Breast epithelium (tissue), 4 donors: ENCODE measurements at regions of chr2 and their contacts with region 1.

Region 1: GRCh38 chr2:26327291-26328272 is 18.4 kb upstream of the SELENOI start:
- DNase-seq: no peak
- H3K4me3 ChIP-seq: no peak overlapping the region
- H3K27ac ChIP-seq: no peak overlapping the region
- H3K4me1 ChIP-seq: no peaks in the 10 kb centered on the region
- H3K27me3 ChIP-seq: no peaks in the 10 kb centered on the region
- CTCF ChIP-seq: no peak
- POLR2A ChIP-seq: no peak

Region 2: DNA sequence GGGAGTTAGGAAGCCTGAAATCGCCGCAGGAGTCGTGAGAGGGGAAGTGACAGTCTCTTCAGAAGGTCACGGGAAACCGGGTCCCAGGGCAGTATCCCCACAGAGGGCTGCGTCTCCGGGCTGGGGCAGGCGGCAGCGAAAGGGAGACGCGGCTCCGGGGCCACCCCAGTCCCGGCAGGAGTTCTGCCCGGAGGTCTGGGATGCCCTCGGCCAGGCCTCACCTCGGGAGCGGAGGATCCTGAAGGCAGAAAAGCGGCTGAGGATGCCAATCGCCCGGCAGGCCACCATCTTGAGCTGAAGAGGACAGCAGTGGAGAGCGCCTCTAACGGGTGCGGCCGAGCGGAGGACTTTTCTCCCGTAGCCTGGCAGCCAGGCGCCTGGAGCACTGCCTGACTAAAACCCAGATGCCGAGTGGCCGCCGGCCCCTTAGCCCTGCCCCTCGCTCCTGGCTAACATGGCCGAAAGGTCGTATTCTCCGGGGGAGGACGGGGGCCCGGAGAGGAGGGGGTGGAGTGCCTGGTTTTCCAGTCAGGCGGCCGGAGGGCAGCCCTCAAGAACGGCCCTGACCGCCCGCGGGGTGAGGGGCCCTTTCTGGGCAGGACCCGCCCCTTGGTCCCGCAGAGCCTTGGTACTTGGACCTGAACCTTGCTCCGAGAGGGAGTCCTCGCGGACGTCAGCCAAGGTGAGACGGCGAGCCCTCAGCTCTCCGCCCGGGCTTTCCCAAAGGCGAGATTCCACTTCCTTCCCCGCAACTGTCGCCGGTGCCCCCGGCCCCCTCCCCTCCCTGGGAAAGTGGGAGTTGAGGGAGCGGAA is 83.1 kb before region 1 on chr2 and contains the starts of genes HADHA and HADHB:
- intact Hi-C with region 1: loop called (anchors 10 kb)
- DNase-seq: peak; percentile 84
- H3K4me3 ChIP-seq: peak within 1 kb of the TSS; percentile 68 to 97 (median 83)
- H3K27ac ChIP-seq: peak within 1 kb of the TSS; percentile 98 to 99
- H3K4me1 ChIP-seq: peaks cover 0 to 8% of the 10 kb centered on the region in 2 donors
- H3K27me3 ChIP-seq: no peaks in the 10 kb centered on the region
- CTCF ChIP-seq: peak; percentile 22 to 46 (median 34)
- POLR2A ChIP-seq: peak; percentile 72
- total RNA-seq, gene HADHA: 139 to 156 (median 141) TPM
- total RNA-seq, gene HADHB: 139 to 157 (median 147) TPM

Region 3: GRCh38 chr2:27683390-27684071 is 1355.9 kb after region 1 on chr2:
- intact Hi-C with region 1: no loop called
- DNase-seq: peak; percentile 57 to 67
- H3K4me3 ChIP-seq: no peak overlapping the region
- H3K27ac ChIP-seq: peak overlapping the region in 1 of 2 donors; percentile 81
- H3K4me1 ChIP-seq: no peaks in the 10 kb centered on the region
- H3K27me3 ChIP-seq: no peaks in the 10 kb centered on the region
- CTCF ChIP-seq: peak; percentile 89 to 98 (median 93)
- POLR2A ChIP-seq: no peak